Heart left ventricle (tissue), 16 donors: ENCODE measurements at regions of chr7 and their contacts with region 1.

Region 1: GRCh38 chr7:112571852-112572607 is 91.2 kb downstream of the LSMEM1 start:
- DNase-seq: no peak
- ATAC-seq: peak in 3 of 4 donors; percentile 43 to 60 (median 52)
- H3K4me3 ChIP-seq: no peak overlapping the region
- H3K27ac ChIP-seq: peak overlapping the region in 9 of 12 donors; percentile 5 to 77 (median 67)
- H3K4me1 ChIP-seq: peaks cover 0 to 33% (median 13%) of the 10 kb centered on the region in 12 donors
- H3K27me3 ChIP-seq: no peaks in the 10 kb centered on the region
- CTCF ChIP-seq: peak in 3 of 12 donors; percentile 24 to 32 (median 30)
- POLR2A ChIP-seq: no peak

Region 2: GRCh38 chr7:112596260-112596659 is 24.2 kb after region 1 on chr7:
- intact Hi-C with region 1: loop called in 1 of 10 experiments (anchors 1 kb)
- DNase-seq: no peak
- ATAC-seq: peak in 1 of 4 donors; percentile 38
- H3K4me3 ChIP-seq: no peak overlapping the region
- H3K27ac ChIP-seq: no peak overlapping the region
- H3K4me1 ChIP-seq: peaks cover 0 to 24% (median 0%) of the 10 kb centered on the region in 12 donors
- H3K27me3 ChIP-seq: no peaks in the 10 kb centered on the region
- CTCF ChIP-seq: no peak
- POLR2A ChIP-seq: no peak

Region 3: GRCh38 chr7:112866424-112866823 is 294.4 kb after region 1 on chr7:
- intact Hi-C with region 1: no loop called
- DNase-seq: no peak
- ATAC-seq: peak in 3 of 4 donors; percentile 21 to 50 (median 47)
- H3K4me3 ChIP-seq: no peak overlapping the region
- H3K27ac ChIP-seq: peak overlapping the region in 3 of 12 donors; percentile 2 to 18 (median 3)
- H3K4me1 ChIP-seq: peaks cover 0 to 24% (median 10%) of the 10 kb centered on the region in 12 donors
- H3K27me3 ChIP-seq: no peaks in the 10 kb centered on the region
- CTCF ChIP-seq: no peak
- POLR2A ChIP-seq: no peak